GM10248 (cell line): ENCODE measurements at regions of chr3 and their contacts with region 1.

Region 1: GRCh38 chr3:183560607-183561006 is 5.1 kb upstream of the KLHL6 start:
- DNase-seq: peak; percentile 55
- CTCF ChIP-seq: peak; percentile 49

Region 2: GRCh38 chr3:183468424-183468823 is 92.2 kb before region 1 on chr3:
- CTCF ChIA-PET with region 1: interaction called, 22 read pairs
- POLR2A ChIA-PET with region 1: no interaction called
- DNase-seq: no peak
- CTCF ChIP-seq: no peak

Region 3: DNA sequence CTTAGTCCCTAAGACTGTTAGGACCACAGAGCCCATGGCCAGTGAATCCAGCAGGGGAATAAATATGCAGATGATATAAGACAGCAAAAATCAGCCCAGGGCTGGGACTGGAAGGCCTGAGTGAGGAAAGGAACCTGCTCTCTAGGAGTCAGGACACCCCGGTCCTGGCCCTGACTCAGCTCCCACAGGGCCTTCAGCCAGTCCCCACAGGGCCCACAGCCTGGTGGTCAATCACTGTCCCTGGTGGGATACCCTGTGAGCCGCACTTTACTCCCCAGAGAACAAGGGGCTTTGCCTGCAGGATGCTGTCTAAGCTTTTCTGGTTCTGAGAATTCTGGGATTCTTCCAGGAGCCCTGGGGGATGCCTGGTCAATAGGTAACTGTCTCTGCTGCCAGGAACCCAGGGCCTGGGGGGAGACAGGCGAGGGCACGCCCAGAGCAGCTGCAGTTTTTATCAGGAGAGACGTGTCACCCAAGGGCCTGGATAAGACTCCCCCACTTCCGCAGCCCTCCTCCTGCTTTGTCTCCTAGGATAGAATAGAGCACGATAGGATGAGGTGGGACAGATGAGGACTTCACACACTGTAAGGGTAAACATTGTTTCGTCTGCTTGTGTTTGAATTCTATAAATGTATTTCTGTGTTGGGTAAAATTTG is 82.7 kb before region 1 on chr3:
- CTCF ChIA-PET with region 1: interaction called, 17 read pairs
- POLR2A ChIA-PET with region 1: no interaction called
- DNase-seq: no peak
- CTCF ChIP-seq: no peak

Region 4: GRCh38 chr3:183548262-183548769 is 12.3 kb before region 1 on chr3:
- CTCF ChIA-PET with region 1: interaction called, 10 read pairs
- POLR2A ChIA-PET with region 1: no interaction called
- DNase-seq: no peak
- CTCF ChIP-seq: no peak

Region 5: GRCh38 chr3:183576487-183577107 is 16.0 kb after region 1 on chr3:
- CTCF ChIA-PET with region 1: interaction called, 14 read pairs
- POLR2A ChIA-PET with region 1: no interaction called
- DNase-seq: no peak
- CTCF ChIP-seq: no peak

Region 6: DNA sequence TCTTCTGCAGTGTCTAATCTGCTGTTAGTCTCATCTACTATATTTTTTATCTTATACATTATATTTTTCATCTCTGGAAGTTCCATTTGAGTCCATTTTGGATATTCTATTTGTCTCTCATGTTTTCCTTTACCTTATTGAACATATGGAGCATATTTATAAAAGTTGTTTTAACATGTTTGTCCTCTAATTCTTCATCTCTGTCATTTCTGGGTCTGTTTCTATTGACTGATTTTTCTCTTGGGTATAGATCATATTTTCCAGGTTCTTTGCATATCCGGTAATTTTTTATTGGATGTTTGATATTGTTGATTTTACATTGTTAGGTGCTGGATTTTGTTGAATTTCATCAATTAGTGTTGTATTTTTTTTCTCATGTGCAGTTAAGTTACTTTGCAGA is 37.4 kb after region 1 on chr3:
- CTCF ChIA-PET with region 1: no interaction called
- POLR2A ChIA-PET with region 1: no interaction called
- DNase-seq: no peak
- CTCF ChIP-seq: no peak

Region 7: DNA sequence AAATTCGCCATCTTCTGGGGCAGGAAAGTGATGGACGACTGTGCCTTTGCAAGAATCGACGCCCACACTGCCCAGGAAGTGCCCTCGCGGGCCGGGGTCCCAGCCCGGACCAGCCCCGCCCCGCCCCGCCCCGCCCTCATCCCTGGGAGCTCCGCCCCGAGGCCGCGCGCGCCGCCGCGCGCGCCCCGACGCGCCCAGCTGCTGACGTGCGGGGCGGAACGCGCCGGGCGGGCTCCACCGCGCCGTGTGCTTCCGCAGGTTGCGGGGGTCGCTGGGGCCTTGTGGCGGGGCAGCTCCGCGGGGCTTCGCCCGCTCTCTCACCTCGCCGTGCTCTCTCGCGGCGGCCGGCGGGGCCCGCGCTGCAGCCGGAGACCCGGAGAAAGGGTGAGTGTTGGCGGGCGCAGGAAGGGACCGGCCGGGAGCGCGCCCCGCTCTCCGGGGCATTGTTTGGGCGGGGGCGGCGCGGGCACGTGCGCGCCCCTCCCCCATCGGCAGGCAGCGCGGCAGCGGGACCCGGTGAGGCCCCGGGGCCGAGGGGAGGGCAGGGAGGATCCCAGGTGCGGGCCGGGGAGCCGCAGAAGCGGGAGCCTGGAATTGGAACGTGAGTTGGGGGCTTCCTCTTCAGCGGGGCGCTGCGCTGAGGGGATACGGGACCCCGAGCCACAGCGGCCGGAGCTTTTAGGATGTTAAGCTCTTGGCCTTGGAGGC is 137.2 kb after region 1 on chr3 and contains the start of gene YEATS2:
- CTCF ChIA-PET with region 1: no interaction called
- POLR2A ChIA-PET with region 1: no interaction called
- DNase-seq: peak; percentile 97
- CTCF ChIP-seq: no peak